ENCODE measurements at regions of chr19 and their contacts with region 1.

Region 1: GRCh38 chr19:27657271-27658051 is 1555.5 kb downstream of the UQCRFS1 start:
- DNase-seq: no peak
- H3K4me3 ChIP-seq: no peak overlapping the region
- H3K27ac ChIP-seq: no peak overlapping the region
- H3K4me1 ChIP-seq: no peaks in the 10 kb centered on the region
- H3K27me3 ChIP-seq: no peaks in the 10 kb centered on the region
- CTCF ChIP-seq: no peak

Region 2: DNA sequence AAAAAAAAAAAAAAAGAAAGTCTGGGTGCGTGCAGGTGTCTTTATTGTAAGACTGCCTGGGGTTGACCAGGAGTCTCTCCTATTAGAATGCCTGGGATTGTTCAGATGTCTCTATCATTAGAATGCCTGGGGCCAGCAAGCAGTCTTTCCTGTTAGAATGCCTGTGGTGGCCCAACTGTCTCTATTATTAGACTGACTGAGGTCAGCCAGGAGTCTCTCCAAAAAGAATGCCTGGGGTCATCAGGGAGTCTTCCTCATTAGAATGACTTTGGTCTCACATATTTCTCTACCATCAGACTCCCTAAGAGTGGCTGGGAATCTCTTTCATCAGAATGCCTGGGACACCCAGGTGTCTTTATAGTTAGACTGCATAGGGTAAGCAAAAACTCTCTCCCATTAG is 22.1 kb before region 1 on chr19:
- intact Hi-C with region 1: loop called (anchors 2 kb)
- DNase-seq: no peak
- H3K4me3 ChIP-seq: no peak overlapping the region
- H3K27ac ChIP-seq: no peak overlapping the region
- H3K4me1 ChIP-seq: no peaks in the 10 kb centered on the region
- H3K27me3 ChIP-seq: no peaks in the 10 kb centered on the region
- CTCF ChIP-seq: no peak

Measured in ascending aorta (tissue), 2 donors.